Breast epithelium (tissue), 4 donors: ENCODE measurements at regions of chr3 and their contacts with region 1.

Region 1: DNA sequence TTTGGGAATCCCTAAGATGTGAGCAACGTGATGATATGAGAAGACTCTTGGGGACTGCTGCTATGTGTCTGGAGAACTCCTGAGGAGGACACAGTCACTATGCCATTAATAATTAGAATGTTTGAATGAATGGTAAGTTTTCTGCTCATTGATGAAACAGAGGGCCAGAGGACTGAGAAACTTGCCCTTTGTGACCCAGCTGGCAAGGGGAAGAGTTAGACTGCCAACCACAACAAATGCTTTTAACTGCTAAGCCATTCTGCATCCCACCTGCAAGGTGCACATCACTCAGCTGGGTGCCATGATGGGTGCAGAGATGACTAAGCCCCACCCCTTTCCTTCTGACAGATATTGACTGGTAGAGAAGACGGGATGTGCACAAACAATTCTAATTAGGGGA is 249.6 kb downstream of the THRB start:
- DNase-seq: no peak
- H3K4me3 ChIP-seq: no peak overlapping the region
- H3K27ac ChIP-seq: no peak overlapping the region
- H3K4me1 ChIP-seq: peaks cover 0 to 6% of the 10 kb centered on the region in 2 donors
- H3K27me3 ChIP-seq: no peaks in the 10 kb centered on the region
- CTCF ChIP-seq: no peak
- POLR2A ChIP-seq: no peak

Region 2: DNA sequence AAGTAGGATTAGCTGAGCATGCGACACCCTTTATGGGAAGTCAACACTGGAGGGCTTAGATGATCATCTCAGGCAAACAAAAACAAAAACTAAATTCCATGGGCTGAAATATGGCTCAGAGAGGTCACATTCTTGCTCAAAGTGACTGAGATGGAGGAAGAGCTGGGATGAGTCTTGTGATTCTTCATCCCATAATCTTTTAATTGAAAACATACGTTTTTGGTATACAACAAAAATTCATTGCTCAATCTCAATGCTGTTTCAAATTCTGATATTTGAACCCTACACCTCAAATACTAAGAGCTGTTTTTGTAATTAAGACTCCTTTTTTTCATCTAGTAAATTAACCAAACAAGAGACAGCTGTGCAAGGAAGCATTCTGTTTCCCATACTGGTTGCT is 43.0 kb before region 1 on chr3:
- intact Hi-C with region 1: loop called (anchors 2 kb)
- DNase-seq: no peak
- H3K4me3 ChIP-seq: no peak overlapping the region
- H3K27ac ChIP-seq: no peak overlapping the region
- H3K4me1 ChIP-seq: no peaks in the 10 kb centered on the region
- H3K27me3 ChIP-seq: no peaks in the 10 kb centered on the region
- CTCF ChIP-seq: no peak
- POLR2A ChIP-seq: no peak

Region 3: GRCh38 chr3:24264748-24265158 is 19.7 kb after region 1 on chr3:
- intact Hi-C with region 1: no loop called
- DNase-seq: no peak
- H3K4me3 ChIP-seq: no peak overlapping the region
- H3K27ac ChIP-seq: no peak overlapping the region
- H3K4me1 ChIP-seq: no peaks in the 10 kb centered on the region
- H3K27me3 ChIP-seq: no peaks in the 10 kb centered on the region
- CTCF ChIP-seq: peak in 2 of 3 donors; percentile 57 to 70
- POLR2A ChIP-seq: no peak

Region 4: DNA sequence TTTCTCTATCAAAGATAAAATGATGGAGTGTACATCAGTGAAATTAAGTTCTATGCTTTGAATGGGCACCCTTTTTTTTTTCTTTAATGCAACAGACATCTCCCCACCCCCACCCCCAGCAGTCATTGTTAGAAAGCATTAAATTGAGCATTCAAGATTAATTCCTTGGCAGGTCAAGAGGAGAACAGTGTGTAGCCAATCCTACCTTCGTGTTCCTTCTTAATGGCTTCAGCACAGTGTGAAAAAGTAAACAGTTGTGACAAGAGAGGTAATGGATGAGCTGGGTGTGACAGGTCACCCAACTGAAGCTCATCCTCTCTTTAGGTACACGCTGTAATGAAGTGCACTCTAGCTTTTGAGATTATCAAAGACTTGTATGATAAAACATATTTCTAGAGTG is 984.5 kb after region 1 on chr3:
- intact Hi-C with region 1: no loop called
- DNase-seq: no peak
- H3K4me3 ChIP-seq: no peak overlapping the region
- H3K27ac ChIP-seq: no peak overlapping the region
- H3K4me1 ChIP-seq: no peaks in the 10 kb centered on the region
- H3K27me3 ChIP-seq: no peaks in the 10 kb centered on the region
- CTCF ChIP-seq: no peak
- POLR2A ChIP-seq: no peak